Tibial artery (tissue), 4 donors: ENCODE measurements at regions of chr6 and their contacts with region 1.

Region 1: DNA sequence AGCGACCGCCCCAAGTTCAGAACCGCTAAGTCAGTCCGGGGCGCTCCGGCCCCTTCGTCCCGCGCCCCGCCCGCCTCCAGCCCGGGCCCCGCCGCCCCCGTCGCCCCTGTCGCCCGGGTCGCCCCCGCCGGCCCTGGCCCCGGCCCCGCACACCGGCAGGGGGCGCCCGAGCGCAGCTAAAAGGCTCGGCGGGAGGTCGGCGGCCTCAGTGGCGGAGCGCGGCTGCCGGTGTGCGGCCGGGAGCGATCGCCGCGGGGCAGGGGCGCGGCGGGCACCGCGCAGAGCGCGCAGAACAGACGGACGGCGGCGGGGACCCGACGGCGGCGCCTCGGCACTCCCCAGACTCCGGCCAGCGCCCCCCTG is at the start of gene FNDC1:
- DNase-seq: no peak
- H3K4me3 ChIP-seq: peak within 1 kb of the TSS; percentile 41 to 55
- H3K27ac ChIP-seq: no peak within 1 kb of the TSS
- H3K4me1 ChIP-seq: peaks cover 0 to 33% (median 22%) of the 10 kb centered on the region in 4 donors
- H3K27me3 ChIP-seq: peaks cover 0 to 30% of the 10 kb centered on the region in 2 donors
- CTCF ChIP-seq: peak in 1 of 2 experiments; percentile 35

Region 2: DNA sequence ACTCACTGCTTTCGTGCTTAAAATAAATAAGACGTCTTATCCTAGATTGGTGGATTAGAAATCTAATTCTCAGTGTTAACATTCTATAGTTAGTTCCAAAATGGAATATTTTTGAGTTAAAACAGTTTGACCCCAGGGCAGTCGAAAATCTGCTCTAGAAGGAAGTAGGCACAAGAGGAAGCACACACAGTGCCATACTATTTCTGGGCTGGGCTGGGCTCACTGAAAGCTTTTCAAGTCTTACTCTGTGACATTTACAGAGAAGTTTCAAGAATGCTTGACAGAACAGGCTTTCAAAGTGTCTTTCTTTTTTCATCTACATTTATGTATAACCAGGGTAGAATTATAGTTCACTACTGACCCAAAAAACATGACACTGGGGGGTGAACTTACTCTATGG is 314.1 kb after region 1 on chr6:
- intact Hi-C with region 1: no loop called
- DNase-seq: no peak
- H3K4me3 ChIP-seq: no peak overlapping the region
- H3K27ac ChIP-seq: no peak overlapping the region
- H3K4me1 ChIP-seq: peaks cover 0 to 5% (median 0%) of the 10 kb centered on the region in 4 donors
- H3K27me3 ChIP-seq: no peaks in the 10 kb centered on the region
- CTCF ChIP-seq: no peak

Region 3: DNA sequence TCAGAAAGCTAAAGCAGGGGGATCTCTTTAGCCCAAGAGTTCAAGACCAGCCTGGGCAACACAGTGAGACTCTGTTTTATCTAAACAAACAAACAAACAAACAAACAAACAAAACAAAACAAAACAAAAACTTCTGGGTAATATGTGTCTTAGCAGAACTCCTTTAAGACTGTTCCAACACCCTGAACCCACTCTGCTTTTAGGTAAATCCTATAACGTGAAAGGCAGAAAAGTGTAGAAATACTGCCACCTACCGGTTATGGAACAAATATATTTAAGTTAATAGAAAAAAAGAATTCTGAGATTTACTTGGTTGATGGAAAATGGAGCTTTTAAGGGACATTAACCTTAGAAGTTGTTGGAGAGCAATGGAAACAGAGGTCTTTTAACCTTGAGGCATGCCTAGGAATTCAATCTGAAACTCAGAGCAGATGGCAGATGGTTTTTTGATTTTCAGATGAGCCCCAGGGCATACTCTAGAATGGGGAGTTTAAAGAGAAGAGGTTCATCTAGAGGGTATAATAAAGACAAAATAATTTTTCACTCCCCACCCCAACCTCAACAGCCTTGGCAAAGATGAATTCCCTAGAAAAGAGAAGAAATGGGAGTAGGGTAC is 485.4 kb after region 1 on chr6:
- intact Hi-C with region 1: loop called (anchors 5 kb)
- DNase-seq: no peak
- H3K4me3 ChIP-seq: no peak overlapping the region
- H3K27ac ChIP-seq: no peak overlapping the region
- H3K4me1 ChIP-seq: no peaks in the 10 kb centered on the region
- H3K27me3 ChIP-seq: no peaks in the 10 kb centered on the region
- CTCF ChIP-seq: peak; percentile 57